ENCODE measurements at regions of chr6 and their contacts with region 1.

Region 1: GRCh38 chr6:68575765-68576439 is 59.2 kb upstream of the ADGRB3 start:
- DNase-seq: no peak
- ATAC-seq: no peak
- H3K4me3 ChIP-seq: no peak overlapping the region
- H3K27ac ChIP-seq: no peak overlapping the region
- H3K4me1 ChIP-seq: no peaks in the 10 kb centered on the region
- H3K27me3 ChIP-seq: peaks cover 0 to 3% (median 0%) of the 10 kb centered on the region in 3 donors
- CTCF ChIP-seq: no peak

Region 2: GRCh38 chr6:68226460-68226859 is 349.4 kb before region 1 on chr6:
- intact Hi-C with region 1: loop called in 1 of 2 experiments (anchors 5 kb)
- DNase-seq: no peak
- ATAC-seq: no peak
- H3K4me3 ChIP-seq: no peak overlapping the region
- H3K27ac ChIP-seq: no peak overlapping the region
- H3K4me1 ChIP-seq: no peaks in the 10 kb centered on the region
- H3K27me3 ChIP-seq: no peaks in the 10 kb centered on the region
- CTCF ChIP-seq: no peak

Measured in psoas muscle (tissue), 8 donors.